RWPE1 (cell line): ENCODE measurements at regions of chr10 and their contacts with region 1.

Region 1: GRCh38 chr10:21488246-21488956 is 37.1 kb downstream of the SKIDA1 start:
- DNase-seq: no peak
- H3K27ac ChIP-seq: no peak overlapping the region
- CTCF ChIP-seq: no peak

Region 2: GRCh38 chr10:21499701-21500577 is 11.5 kb after region 1 on chr10:
- CTCF ChIA-PET with region 1: no interaction called
- POLR2A ChIA-PET with region 1: no interaction called
- DNase-seq: no peak
- H3K27ac ChIP-seq: no peak overlapping the region
- CTCF ChIP-seq: no peak

Region 3: DNA sequence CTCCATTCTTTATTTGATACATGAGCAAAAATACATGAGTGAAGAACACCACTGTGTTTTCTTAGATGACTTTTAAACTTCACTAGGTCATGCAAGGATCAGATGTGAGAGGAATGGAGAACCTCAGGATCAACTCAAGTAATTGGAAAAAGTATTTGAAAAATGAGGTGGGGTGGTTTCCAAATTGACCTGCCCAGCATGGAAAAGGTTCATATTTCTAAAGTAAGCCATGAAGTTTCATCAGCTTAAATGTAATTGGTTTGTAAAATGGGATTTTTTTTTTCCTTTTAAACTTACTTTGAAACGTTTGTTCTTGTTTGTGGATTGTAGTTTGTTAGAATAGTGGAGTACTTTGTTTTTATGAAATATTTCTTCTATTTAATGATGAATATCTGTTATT is 180.4 kb after region 1 on chr10:
- CTCF ChIA-PET with region 1: interaction called, 10 read pairs
- POLR2A ChIA-PET with region 1: no interaction called
- DNase-seq: no peak
- H3K27ac ChIP-seq: no peak overlapping the region
- CTCF ChIP-seq: no peak